Naive thymus-derived CD4-positive, alpha-beta T cell (primary cell): ENCODE measurements at regions of chr2 and their contacts with region 1.

Region 1: GRCh38 chr2:64644177-64645004 is 9.3 kb downstream of the SERTAD2 start:
- DNase-seq: peak in 8 of 9 donors; percentile 48 to 57 (median 53)
- ATAC-seq: peak; percentile 79
- H3K4me3 ChIP-seq: peak overlapping the region; percentile 62
- H3K4me3 Mint-ChIP-seq: peak overlapping the region; percentile 80 to 93 (median 90)
- H3K27ac ChIP-seq: peak overlapping the region; percentile 52
- H3K27ac Mint-ChIP-seq: peak overlapping the region; percentile 34 to 94 (median 88)
- H3K4me1 ChIP-seq: peaks cover 4 to 72% of the 10 kb centered on the region in 2 donors
- H3K4me1 Mint-ChIP-seq: peaks cover 45 to 100% (median 89%) of the 10 kb centered on the region in 7 donors
- H3K27me3 ChIP-seq: no peaks in the 10 kb centered on the region
- H3K27me3 Mint-ChIP-seq: no peaks in the 10 kb centered on the region

Region 2: DNA sequence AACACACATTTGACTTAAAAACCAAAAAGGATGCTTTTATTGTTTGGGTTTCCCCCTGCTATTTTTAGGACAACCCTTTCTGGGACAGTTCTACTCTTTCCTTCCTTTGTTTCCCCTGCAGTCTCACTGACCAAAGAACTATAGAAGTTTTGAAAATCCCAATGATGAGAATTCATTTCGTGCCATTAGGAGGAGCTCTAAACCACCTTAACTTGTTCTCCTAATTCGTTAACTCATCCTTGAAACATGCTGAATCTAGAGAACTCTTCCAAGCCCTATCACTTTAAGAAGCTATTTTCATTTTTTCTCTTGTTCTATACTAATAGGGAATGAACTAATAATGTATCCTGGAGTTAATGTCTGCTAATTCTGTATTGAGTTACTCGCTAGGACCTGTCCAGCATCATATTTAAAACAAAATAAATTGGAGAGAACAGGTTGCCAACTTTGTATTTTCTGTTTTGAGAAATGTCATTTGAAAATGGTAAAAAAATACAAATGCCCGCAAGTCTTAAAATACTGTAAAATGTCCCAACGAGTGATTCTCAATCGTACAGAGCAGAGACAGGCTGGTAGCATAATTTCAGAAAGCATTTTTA is 57.4 kb before region 1 on chr2:
- CTCF ChIA-PET with region 1: interaction called, 3 read pairs
- POLR2A ChIA-PET with region 1: interaction called, 3 read pairs
- intact Hi-C with region 1: loop called (anchors 1 to 2 kb)
- DNase-seq: peak in 6 of 9 donors; percentile 30 to 55 (median 42)
- ATAC-seq: peak; percentile 72
- H3K4me3 ChIP-seq: no peak overlapping the region
- H3K4me3 Mint-ChIP-seq: no peak overlapping the region
- H3K27ac ChIP-seq: no peak overlapping the region
- H3K27ac Mint-ChIP-seq: peak overlapping the region in 1 of 9 donors; percentile 64
- H3K4me1 ChIP-seq: no peaks in the 10 kb centered on the region
- H3K4me1 Mint-ChIP-seq: peaks cover 0 to 14% (median 5%) of the 10 kb centered on the region in 7 donors
- H3K27me3 ChIP-seq: no peaks in the 10 kb centered on the region
- H3K27me3 Mint-ChIP-seq: no peaks in the 10 kb centered on the region

Region 3: GRCh38 chr2:64698668-64699444 is 54.5 kb after region 1 on chr2:
- CTCF ChIA-PET with region 1: no interaction called
- POLR2A ChIA-PET with region 1: no interaction called
- intact Hi-C with region 1: loop called in 1 of 2 experiments (anchors 2 kb)
- DNase-seq: no peak
- ATAC-seq: peak; percentile 76
- H3K4me3 ChIP-seq: no peak overlapping the region
- H3K4me3 Mint-ChIP-seq: peak overlapping the region in 1 of 10 donors; percentile 80
- H3K27ac ChIP-seq: no peak overlapping the region
- H3K27ac Mint-ChIP-seq: peak overlapping the region in 4 of 9 donors; percentile 2 to 79 (median 36)
- H3K4me1 ChIP-seq: peaks cover 8 to 12% of the 10 kb centered on the region in 2 donors
- H3K4me1 Mint-ChIP-seq: peaks cover 21 to 59% (median 41%) of the 10 kb centered on the region in 7 donors
- H3K27me3 ChIP-seq: no peaks in the 10 kb centered on the region
- H3K27me3 Mint-ChIP-seq: no peaks in the 10 kb centered on the region

Region 4: GRCh38 chr2:64767670-64768468 is 123.5 kb after region 1 on chr2:
- CTCF ChIA-PET with region 1: interaction called, 15 read pairs
- POLR2A ChIA-PET with region 1: interaction called, 5 read pairs
- intact Hi-C with region 1: loop called (anchors 1 kb)
- DNase-seq: peak; percentile 35 to 78 (median 55)
- ATAC-seq: peak; percentile 89
- H3K4me3 ChIP-seq: peak overlapping the region; percentile 80
- H3K4me3 Mint-ChIP-seq: peak overlapping the region; percentile 90 to 99 (median 96)
- H3K27ac ChIP-seq: peak overlapping the region; percentile 73
- H3K27ac Mint-ChIP-seq: peak overlapping the region; percentile 92 to 97 (median 95)
- H3K4me1 ChIP-seq: peaks cover 3 to 12% of the 10 kb centered on the region in 2 donors
- H3K4me1 Mint-ChIP-seq: peaks cover 9 to 40% (median 23%) of the 10 kb centered on the region in 7 donors
- H3K27me3 ChIP-seq: no peaks in the 10 kb centered on the region
- H3K27me3 Mint-ChIP-seq: peaks cover 0 to 15% (median 0%) of the 10 kb centered on the region in 5 donors

Region 5: GRCh38 chr2:64865073-64865830 is 220.9 kb after region 1 on chr2:
- CTCF ChIA-PET with region 1: interaction called, 4 read pairs
- POLR2A ChIA-PET with region 1: interaction called, 3 read pairs
- intact Hi-C with region 1: loop called (anchors 1 kb)
- DNase-seq: peak; percentile 30 to 82 (median 72)
- ATAC-seq: peak; percentile 87
- H3K4me3 ChIP-seq: peak overlapping the region; percentile 88
- H3K4me3 Mint-ChIP-seq: peak overlapping the region in 7 of 10 donors; percentile 72 to 86 (median 81)
- H3K27ac ChIP-seq: peak overlapping the region; percentile 40
- H3K27ac Mint-ChIP-seq: no peak overlapping the region
- H3K4me1 ChIP-seq: peaks cover 0 to 5% of the 10 kb centered on the region in 2 donors
- H3K4me1 Mint-ChIP-seq: peaks cover 0 to 5% (median 0%) of the 10 kb centered on the region in 7 donors
- H3K27me3 ChIP-seq: peaks cover 0 to 3% of the 10 kb centered on the region in 2 donors
- H3K27me3 Mint-ChIP-seq: peaks cover 0 to 17% (median 8%) of the 10 kb centered on the region in 5 donors

Region 6: GRCh38 chr2:65722028-65722778 is 1077.8 kb after region 1 on chr2:
- CTCF ChIA-PET with region 1: no interaction called
- POLR2A ChIA-PET with region 1: no interaction called
- intact Hi-C with region 1: no loop called
- DNase-seq: no peak
- ATAC-seq: no peak
- H3K4me3 ChIP-seq: no peak overlapping the region
- H3K4me3 Mint-ChIP-seq: no peak overlapping the region
- H3K27ac ChIP-seq: no peak overlapping the region
- H3K27ac Mint-ChIP-seq: no peak overlapping the region
- H3K4me1 ChIP-seq: no peaks in the 10 kb centered on the region
- H3K4me1 Mint-ChIP-seq: no peaks in the 10 kb centered on the region
- H3K27me3 ChIP-seq: peaks cover 0 to 2% of the 10 kb centered on the region in 2 donors
- H3K27me3 Mint-ChIP-seq: peaks cover 4 to 16% (median 13%) of the 10 kb centered on the region in 5 donors